GM10248 (cell line): ENCODE measurements at regions of chr1 and their contacts with region 1.

Region 1: GRCh38 chr1:92291372-92291999 is 7.3 kb downstream of the GLMN start:
- DNase-seq: no peak
- CTCF ChIP-seq: peak; percentile 71

Region 2: DNA sequence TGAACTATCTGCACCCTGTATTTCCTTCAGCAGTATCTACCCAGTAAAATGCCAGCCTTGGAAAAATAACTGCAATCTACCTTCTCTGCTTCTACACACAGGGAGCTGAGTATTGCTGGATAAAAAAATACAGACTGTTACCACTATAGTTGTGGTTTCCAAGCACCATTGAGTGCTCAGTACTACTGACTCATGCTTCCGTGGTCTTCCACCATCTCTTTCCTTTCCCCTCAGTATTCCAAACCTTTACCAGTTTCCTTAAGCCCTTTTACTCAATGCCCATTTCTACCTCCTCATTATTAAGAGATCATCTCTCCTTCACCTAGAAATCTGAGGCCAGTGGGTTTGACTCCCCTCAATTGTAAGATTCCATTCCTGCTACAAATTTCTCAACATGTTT is 16.5 kb before region 1 on chr1:
- CTCF ChIA-PET with region 1: interaction called, 10 read pairs
- POLR2A ChIA-PET with region 1: no interaction called
- DNase-seq: no peak
- CTCF ChIP-seq: no peak